CD8-positive, alpha-beta memory T cell (primary cell): ENCODE measurements at regions of chr3 and their contacts with region 1.

Region 1: DNA sequence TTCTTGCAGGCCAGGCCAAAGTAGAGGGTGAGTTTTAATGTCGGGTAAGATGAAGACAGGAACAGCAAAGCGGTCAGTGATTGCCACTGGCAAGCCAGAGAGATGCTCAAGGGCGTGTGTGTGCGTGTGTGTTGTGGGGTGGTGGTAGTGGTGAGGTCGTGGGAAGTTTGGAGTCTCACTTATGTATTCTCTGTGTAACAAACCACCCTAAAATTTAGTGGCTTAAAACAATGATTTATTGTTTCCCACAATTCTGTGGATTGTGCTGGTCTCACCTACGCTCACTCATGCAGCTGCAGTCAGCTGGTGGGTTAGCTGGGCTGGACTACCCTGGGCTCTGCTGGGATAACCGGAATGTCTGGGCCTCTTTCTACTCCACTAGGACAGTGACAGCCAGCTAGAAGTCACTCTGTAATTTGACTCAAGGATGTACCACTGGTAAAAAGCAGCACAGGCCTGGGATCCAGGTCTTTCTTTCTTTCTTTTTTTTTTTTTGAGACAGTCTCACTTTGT is 50.9 kb upstream of the BHLHE40 start:
- DNase-seq: no peak
- H3K4me3 ChIP-seq: no peak overlapping the region
- H3K4me3 Mint-ChIP-seq: no peak overlapping the region
- H3K27ac ChIP-seq: no peak overlapping the region
- H3K27ac Mint-ChIP-seq: peak overlapping the region in 6 of 8 donors; percentile 15 to 84 (median 60)
- H3K4me1 ChIP-seq: peaks cover 6% of the 10 kb centered on the region
- H3K4me1 Mint-ChIP-seq: peaks cover 7 to 17% (median 14%) of the 10 kb centered on the region in 3 donors
- H3K27me3 ChIP-seq: no peaks in the 10 kb centered on the region
- H3K27me3 Mint-ChIP-seq: no peaks in the 10 kb centered on the region

Region 2: DNA sequence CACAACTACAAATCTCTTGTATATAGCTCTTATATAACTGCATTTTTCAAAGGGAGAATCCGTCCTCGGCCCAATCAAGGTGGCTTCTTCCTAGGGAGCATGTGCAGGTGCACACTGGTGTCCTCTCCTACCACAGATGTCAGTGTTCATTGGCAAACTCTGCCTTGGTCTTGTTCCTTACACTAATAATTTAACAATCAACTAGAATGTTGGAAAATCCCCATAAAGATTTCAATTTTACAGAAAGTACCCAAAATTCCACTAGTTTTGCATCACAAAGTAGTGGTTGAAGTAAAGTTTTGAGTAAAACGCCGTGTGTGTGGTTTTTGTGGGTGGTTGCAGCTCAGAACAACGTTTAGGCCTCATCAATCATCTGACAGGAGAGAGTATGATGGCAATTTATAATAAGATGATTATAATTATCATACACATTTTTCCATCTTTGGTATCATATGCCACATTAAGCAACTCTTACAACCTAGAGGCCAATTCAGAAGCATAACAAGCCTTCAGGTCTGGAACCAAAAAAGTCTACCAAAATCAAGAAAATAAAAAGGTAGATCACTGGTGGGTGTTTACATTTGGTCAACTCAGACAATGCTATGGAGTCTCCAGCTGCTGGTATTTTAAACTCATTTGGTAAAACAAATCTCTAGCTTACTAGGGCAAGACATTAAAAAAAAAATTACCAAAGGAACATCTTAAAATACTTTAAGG is 78.0 kb before region 1 on chr3:
- CTCF ChIA-PET with region 1: no interaction called
- POLR2A ChIA-PET with region 1: interaction called, 12 read pairs
- DNase-seq: peak in 1 of 5 donors; percentile 37
- H3K4me3 ChIP-seq: peak overlapping the region; percentile 17
- H3K4me3 Mint-ChIP-seq: peak overlapping the region in 6 of 7 donors; percentile 3 to 66 (median 50)
- H3K27ac ChIP-seq: peak overlapping the region; percentile 29
- H3K27ac Mint-ChIP-seq: peak overlapping the region; percentile 81 to 99 (median 95)
- H3K4me1 ChIP-seq: peaks cover 70% of the 10 kb centered on the region
- H3K4me1 Mint-ChIP-seq: peaks cover 60 to 84% (median 82%) of the 10 kb centered on the region in 3 donors
- H3K27me3 ChIP-seq: no peaks in the 10 kb centered on the region
- H3K27me3 Mint-ChIP-seq: no peaks in the 10 kb centered on the region

Region 3: GRCh38 chr3:4914464-4914863 is 13.9 kb before region 1 on chr3:
- CTCF ChIA-PET with region 1: no interaction called
- POLR2A ChIA-PET with region 1: no interaction called
- DNase-seq: no peak
- H3K4me3 ChIP-seq: no peak overlapping the region
- H3K4me3 Mint-ChIP-seq: no peak overlapping the region
- H3K27ac ChIP-seq: no peak overlapping the region
- H3K27ac Mint-ChIP-seq: no peak overlapping the region
- H3K4me1 ChIP-seq: no peaks in the 10 kb centered on the region
- H3K4me1 Mint-ChIP-seq: peaks cover 0 to 3% (median 2%) of the 10 kb centered on the region in 3 donors
- H3K27me3 ChIP-seq: no peaks in the 10 kb centered on the region
- H3K27me3 Mint-ChIP-seq: no peaks in the 10 kb centered on the region

Region 4: GRCh38 chr3:5006755-5007202 is 78.4 kb after region 1 on chr3:
- CTCF ChIA-PET with region 1: no interaction called
- POLR2A ChIA-PET with region 1: no interaction called
- DNase-seq: peak in 4 of 5 donors; percentile 67 to 82 (median 81)
- H3K4me3 ChIP-seq: no peak overlapping the region
- H3K4me3 Mint-ChIP-seq: peak overlapping the region; percentile 20 to 78 (median 53)
- H3K27ac ChIP-seq: peak overlapping the region; percentile 33
- H3K27ac Mint-ChIP-seq: peak overlapping the region; percentile 47 to 99 (median 92)
- H3K4me1 ChIP-seq: peaks cover 30% of the 10 kb centered on the region
- H3K4me1 Mint-ChIP-seq: peaks cover 44 to 54% (median 49%) of the 10 kb centered on the region in 3 donors
- H3K27me3 ChIP-seq: no peaks in the 10 kb centered on the region
- H3K27me3 Mint-ChIP-seq: no peaks in the 10 kb centered on the region